HepG2 (cell line): ENCODE measurements at regions of chr9 and their contacts with region 1.

Region 1: DNA sequence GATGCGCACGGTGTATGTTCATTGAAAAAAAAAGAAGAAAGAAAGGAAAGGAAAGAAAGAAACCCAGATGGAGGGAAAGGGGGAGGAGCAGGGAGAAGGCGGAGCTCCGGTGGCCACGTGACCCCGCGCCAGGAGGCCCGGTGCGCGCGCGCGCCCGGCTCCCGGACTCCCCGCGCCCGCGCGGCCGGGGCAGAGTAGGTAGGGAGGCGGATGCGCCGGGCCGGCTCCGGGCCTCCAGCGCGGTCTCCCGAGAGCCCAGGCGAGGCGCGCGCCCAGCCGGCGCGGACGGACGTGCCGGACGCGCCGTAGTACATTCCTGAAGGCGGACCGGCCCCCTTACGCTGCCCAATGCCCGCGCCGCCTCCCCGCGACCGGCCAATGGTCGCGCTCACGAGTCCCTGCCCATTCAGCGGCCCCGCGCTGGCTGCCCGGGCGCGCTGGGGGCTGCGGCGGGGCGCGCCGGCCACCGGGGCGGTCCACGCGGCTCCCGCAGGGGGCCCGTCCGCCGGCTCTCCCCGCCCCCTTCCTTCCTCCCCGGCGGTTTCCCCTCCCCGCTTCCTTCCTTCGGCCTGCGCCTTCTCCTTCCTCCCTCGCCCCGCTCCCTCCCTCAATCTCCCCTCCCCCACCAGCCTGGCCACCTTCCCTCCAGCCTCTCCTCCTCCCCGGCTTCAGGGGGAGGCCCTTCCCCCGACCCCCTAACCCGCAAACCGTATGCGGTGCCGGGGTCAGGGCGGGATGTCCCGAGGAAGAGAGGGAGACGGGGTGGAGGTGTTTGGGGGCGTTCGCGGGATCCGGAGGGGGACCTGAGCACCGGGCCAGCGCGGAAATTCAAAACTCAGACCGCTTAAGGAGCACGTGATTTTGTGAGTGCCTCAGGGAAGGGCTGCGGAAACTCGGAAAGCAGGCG is 5.8 kb downstream of the PTCH1 start:
- DNase-seq: peak; percentile 85
- ATAC-seq: peak; percentile 83
- H3K4me3 ChIP-seq: peak overlapping the region; percentile 80 to 93 (median 82)
- H3K27ac ChIP-seq: peak overlapping the region; percentile 88
- H3K4me1 ChIP-seq: peaks cover 34% of the 10 kb centered on the region
- H3K27me3 ChIP-seq: no peaks in the 10 kb centered on the region; a peak in 2 of 5 replicates
- CTCF ChIP-seq: no peak
- EP300 ChIP-seq: no peak
- POLR2A ChIP-seq: no peak; a peak in 1 of 4 replicates
- RAD21 ChIP-seq: 0 out of 2 replicates have a peak, but pooled peaks have one; percentile 27

Region 2: DNA sequence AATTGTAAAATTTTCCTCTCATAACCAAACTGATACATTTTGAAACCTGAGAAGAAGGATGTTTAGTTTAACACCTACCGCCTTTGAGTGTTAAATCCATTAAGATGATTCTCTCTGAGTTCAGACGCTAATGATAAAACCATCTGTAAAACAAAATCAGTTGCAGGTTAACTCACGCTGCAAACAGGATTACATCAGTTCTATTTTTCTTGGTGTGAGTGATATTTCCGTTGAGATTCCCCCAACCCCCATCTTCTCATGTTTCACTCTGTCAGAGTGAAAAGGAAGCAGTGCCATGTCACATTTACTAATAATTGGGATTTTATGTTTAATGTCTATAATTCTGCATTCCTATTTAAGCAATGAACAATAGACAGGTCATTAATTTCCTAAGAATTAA is 340.0 kb before region 1 on chr9:
- CTCF ChIA-PET with region 1: no interaction called
- POLR2A ChIA-PET with region 1: no interaction called
- in situ Hi-C with region 1: no loop called
- intact Hi-C with region 1: no loop called
- DNase-seq: no peak
- ATAC-seq: no peak
- H3K4me3 ChIP-seq: no peak overlapping the region
- H3K27ac ChIP-seq: no peak overlapping the region
- H3K4me1 ChIP-seq: no peaks in the 10 kb centered on the region
- H3K27me3 ChIP-seq: no peaks in the 10 kb centered on the region
- CTCF ChIP-seq: no peak
- EP300 ChIP-seq: no peak
- POLR2A ChIP-seq: no peak
- RAD21 ChIP-seq: no peak

Region 3: DNA sequence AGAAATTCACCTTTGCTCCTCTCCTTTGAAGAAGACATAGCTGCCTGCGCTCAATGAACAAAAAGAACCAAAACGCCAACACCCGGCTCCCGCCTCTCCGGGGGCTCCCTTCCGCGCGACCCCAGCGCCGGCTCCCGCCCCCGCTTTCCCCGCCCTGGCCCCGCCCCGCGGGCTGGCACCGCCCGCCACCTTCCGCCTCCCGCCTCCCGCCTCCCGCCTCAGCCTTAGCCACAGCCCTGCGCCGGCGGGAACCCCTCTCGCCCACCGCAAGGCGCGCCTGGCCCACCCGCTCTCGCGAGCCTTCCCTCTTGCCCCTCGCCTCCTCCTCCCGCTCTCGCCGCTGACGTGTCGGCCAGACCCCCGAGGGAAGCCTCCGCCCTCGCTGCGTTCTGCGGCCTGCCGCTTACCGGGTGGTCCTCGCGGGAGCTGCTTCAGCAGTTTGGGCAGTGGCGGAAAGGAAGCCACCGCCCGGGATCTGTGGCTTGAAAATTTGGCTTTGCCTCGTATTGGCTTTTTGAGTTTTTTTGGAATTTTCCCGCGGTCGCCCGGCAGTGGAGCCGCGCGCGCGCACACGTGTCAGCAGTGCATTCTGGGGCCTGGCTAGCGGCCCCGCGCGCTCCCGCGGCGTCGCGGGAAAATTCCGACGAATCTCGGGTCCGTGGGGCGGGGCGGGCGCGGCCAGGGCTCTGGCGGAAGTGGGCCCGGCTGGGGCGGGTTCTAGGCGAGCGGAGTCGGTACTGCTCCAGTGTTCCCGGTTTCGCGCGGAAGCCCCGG is 193.7 kb before region 1 on chr9 and contains the start of gene FANCC:
- CTCF ChIA-PET with region 1: no interaction called
- POLR2A ChIA-PET with region 1: interaction called, 3 read pairs
- in situ Hi-C with region 1: no loop called
- intact Hi-C with region 1: loop called (anchors 5 kb)
- DNase-seq: peak; percentile 86
- ATAC-seq: peak; percentile 90
- H3K4me3 ChIP-seq: peak within 1 kb of the TSS; percentile 73 to 85 (median 85)
- H3K27ac ChIP-seq: peak within 1 kb of the TSS; percentile 100
- H3K4me1 ChIP-seq: peaks cover 64% of the 10 kb centered on the region
- H3K27me3 ChIP-seq: no peaks in the 10 kb centered on the region
- CTCF ChIP-seq: no peak
- EP300 ChIP-seq: no peak
- POLR2A ChIP-seq: peak; percentile 57 to 84
- RAD21 ChIP-seq: peak; percentile 40
- total RNA-seq, gene FANCC: 7.4 and 11.4 TPM in 2 replicates

Region 4: DNA sequence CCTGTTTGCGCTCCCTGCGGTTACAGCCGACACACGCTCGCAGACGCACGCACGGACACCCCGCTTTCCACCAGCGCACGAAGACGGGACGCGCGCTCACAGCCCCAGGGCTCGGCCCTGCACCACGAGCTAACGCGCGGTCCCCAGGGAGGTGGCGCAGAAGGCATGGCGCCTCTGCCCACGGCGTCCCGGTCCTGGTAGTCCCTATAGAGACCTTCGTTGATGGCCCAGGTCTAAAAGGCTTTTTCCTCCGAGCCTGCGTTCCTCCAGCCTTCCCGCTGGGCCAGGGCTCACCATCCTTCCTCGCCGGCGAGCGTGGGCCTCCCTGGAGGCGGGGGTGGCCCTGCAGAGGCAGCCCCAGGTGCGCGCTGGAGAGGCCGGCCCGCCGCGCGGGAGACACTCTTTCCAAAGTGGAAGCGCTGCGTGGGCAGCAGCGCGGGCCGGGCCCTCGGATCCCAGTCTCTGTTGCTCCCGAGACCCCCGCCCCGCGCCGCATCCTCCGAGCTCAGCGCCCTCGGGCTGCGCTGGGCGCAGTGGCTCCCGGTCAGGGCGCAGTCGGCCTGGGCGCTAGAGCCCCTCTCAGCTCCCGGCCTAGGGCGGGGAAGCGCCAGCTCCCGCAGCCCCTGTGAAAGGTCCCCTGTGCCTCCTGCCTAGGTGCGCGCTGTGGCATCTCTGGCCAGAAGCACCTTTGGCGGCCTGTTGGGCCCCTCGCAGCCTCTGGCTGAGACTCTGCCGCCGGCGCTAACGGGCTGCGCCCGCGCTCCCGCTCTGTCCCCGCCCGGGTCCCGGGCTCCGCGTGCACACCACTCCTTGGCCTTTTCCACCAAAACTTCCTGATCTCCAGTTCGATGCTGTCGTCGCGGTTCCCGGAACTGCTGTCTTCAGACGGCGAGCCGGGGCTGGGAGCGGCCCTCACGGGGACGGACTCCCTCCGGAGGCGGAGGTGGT is 161.6 kb before region 1 on chr9:
- CTCF ChIA-PET with region 1: no interaction called
- POLR2A ChIA-PET with region 1: no interaction called
- in situ Hi-C with region 1: no loop called
- intact Hi-C with region 1: no loop called
- DNase-seq: no peak
- ATAC-seq: peak; percentile 54
- H3K4me3 ChIP-seq: peak overlapping the region in 2 of 3 experiments; percentile 16 to 44; a peak in 3 of 6 replicates
- H3K27ac ChIP-seq: no peak overlapping the region
- H3K4me1 ChIP-seq: no peaks in the 10 kb centered on the region
- H3K27me3 ChIP-seq: 0 out of 5 replicates have a peak, but pooled peaks cover 0 to 3% of the 10 kb centered on the region in 2 experiments
- CTCF ChIP-seq: no peak
- EP300 ChIP-seq: no peak
- POLR2A ChIP-seq: no peak
- RAD21 ChIP-seq: no peak

Region 5: DNA sequence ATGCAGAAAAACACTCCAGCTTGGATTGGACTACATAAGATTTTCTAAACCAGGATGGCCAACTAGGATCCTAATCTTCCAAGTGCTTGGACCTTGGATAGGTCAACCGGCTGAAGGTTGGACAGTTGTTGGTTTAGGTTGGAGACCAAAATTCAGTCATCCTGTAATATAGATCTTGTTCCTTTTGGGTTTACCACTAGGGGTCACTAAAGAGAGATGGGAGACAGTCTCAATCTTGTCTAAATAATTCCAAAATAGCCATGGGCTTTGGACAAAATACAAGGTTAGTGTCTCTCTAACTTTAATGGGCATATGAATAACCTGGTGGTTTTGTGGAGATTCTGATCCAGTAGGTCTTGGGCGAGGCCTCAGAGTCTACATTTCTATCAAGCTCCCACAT is 215.8 kb after region 1 on chr9:
- CTCF ChIA-PET with region 1: no interaction called
- POLR2A ChIA-PET with region 1: no interaction called
- in situ Hi-C with region 1: no loop called
- intact Hi-C with region 1: loop called (anchors 10 kb)
- DNase-seq: peak; percentile 48
- ATAC-seq: peak; percentile 44; the same call in 2 of the 3 replicates
- H3K4me3 ChIP-seq: no peak overlapping the region
- H3K27ac ChIP-seq: no peak overlapping the region
- H3K4me1 ChIP-seq: peaks cover 69% of the 10 kb centered on the region
- H3K27me3 ChIP-seq: no peaks in the 10 kb centered on the region
- CTCF ChIP-seq: peak; percentile 61
- EP300 ChIP-seq: no peak
- POLR2A ChIP-seq: no peak
- RAD21 ChIP-seq: no peak

Region 6: GRCh38 chr9:96061293-96061987 is 550.5 kb after region 1 on chr9:
- CTCF ChIA-PET with region 1: no interaction called
- POLR2A ChIA-PET with region 1: no interaction called
- in situ Hi-C with region 1: no loop called
- intact Hi-C with region 1: loop called (anchors 10 kb)
- DNase-seq: peak; percentile 21
- ATAC-seq: peak; percentile 87
- H3K4me3 ChIP-seq: no peak overlapping the region
- H3K27ac ChIP-seq: no peak overlapping the region
- H3K4me1 ChIP-seq: peaks cover 8% of the 10 kb centered on the region; the same call in 1 of the 2 replicates
- H3K27me3 ChIP-seq: peaks cover 1 to 3% of the 10 kb centered on the region in 2 experiments; a peak in 2 of 5 replicates
- CTCF ChIP-seq: peak; percentile 61
- EP300 ChIP-seq: no peak
- POLR2A ChIP-seq: no peak
- RAD21 ChIP-seq: peak; percentile 45; the same call in 1 of the 2 replicates

Region 7: DNA sequence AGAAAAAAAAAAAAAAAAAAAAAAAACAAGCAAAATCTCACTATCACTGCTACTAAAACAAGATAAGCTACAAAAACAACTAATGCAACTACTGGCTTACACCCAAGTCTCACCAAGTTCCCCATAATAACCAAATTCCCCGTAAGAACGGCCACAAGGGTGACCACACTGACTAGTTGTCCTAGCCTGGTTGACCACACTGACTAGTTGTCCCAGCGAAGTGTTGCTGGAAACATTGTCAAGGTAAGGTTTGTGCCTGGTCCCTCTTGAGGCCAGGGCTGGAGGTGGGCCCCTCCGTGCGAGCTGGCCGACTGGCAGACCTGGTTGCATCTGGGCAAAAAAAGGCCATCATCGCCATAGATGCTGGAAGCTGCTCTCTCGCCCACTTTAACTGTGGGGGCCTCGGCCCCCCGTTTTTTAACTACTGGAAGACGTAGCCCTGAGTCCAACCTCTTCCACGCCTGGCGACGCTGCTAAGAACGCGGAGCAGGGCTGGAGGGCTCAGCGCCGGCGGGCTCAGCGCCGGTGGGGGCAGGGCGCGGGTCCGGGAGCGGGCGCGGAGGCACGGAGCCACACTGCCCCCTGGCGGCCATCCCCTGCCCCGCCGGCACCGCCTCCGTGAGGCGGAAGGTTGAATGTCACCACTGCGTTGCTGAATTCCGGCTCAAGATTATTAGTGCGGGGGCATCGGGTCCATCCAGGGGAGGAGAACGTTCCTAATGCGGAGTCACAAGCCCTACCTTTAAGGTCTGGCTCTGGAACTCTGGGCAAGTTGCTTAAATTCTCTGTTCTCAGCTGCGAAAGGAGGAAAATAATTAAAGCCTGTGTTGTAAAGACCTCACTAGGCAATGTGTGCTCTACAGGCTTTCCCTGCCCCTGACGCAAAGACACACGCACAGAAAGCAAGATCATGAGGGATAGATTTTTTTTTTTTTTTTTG is 707.1 kb after region 1 on chr9:
- CTCF ChIA-PET with region 1: no interaction called
- POLR2A ChIA-PET with region 1: no interaction called
- in situ Hi-C with region 1: no loop called
- intact Hi-C with region 1: loop called (anchors 10 kb)
- DNase-seq: peak; percentile 28
- ATAC-seq: peak; percentile 93
- H3K4me3 ChIP-seq: peak overlapping the region; percentile 35 to 72 (median 39)
- H3K27ac ChIP-seq: no peak overlapping the region
- H3K4me1 ChIP-seq: peaks cover 10% of the 10 kb centered on the region
- H3K27me3 ChIP-seq: peaks cover 0 to 38% of the 10 kb centered on the region in 2 experiments; a peak in 3 of 5 replicates
- CTCF ChIP-seq: peak; percentile 90
- EP300 ChIP-seq: no peak
- POLR2A ChIP-seq: no peak
- RAD21 ChIP-seq: peak; percentile 98